Caco-2 (cell line): ENCODE measurements at regions of chr2 and their contacts with region 1.

Region 1: GRCh38 chr2:218395797-218396687 is 3.6 kb upstream of the CTDSP1 start:
- DNase-seq: peak; percentile 97
- H3K4me3 ChIP-seq: peak overlapping the region; percentile 77
- H3K4me3 Mint-ChIP-seq: peak overlapping the region; percentile 98
- H3K27ac Mint-ChIP-seq: peak overlapping the region; percentile 98
- H3K4me1 ChIP-seq: peaks cover 9% of the 10 kb centered on the region
- H3K4me1 Mint-ChIP-seq: peaks cover 22% of the 10 kb centered on the region
- H3K27me3 ChIP-seq: no peaks in the 10 kb centered on the region
- H3K27me3 Mint-ChIP-seq: no peaks in the 10 kb centered on the region
- CTCF ChIP-seq: peak; percentile 86 to 92

Region 2: DNA sequence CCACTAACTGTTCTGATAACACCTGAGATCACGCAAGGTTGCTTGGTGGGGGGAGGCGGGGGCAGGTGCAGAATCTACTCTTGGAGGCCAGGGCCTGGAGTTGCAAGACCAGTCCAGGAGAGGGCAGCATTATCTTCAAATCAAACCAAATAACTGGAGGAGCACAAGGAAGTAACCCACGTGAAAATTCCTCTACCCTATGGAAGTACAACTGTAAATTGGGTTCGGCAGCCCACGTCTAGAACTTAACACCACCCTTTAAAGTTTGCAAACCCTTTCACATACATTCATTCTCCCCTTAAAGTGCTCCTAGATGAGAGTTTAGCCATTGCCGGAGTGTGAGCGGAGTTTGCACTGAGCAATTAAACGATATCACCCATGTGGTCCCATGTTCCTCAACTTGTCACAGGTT is 209.7 kb before region 1 on chr2:
- CTCF ChIA-PET with region 1: no interaction called
- POLR2A ChIA-PET with region 1: no interaction called
- intact Hi-C with region 1: loop called (anchors 2 kb)
- DNase-seq: peak; percentile 78 to 83
- H3K4me3 ChIP-seq: no peak overlapping the region
- H3K4me3 Mint-ChIP-seq: no peak overlapping the region
- H3K27ac Mint-ChIP-seq: no peak overlapping the region
- H3K4me1 ChIP-seq: peaks cover 13% of the 10 kb centered on the region
- H3K4me1 Mint-ChIP-seq: no peaks in the 10 kb centered on the region
- H3K27me3 ChIP-seq: no peaks in the 10 kb centered on the region; the same call in 1 of the 2 replicates
- H3K27me3 Mint-ChIP-seq: no peaks in the 10 kb centered on the region
- CTCF ChIP-seq: peak; percentile 82 to 87

Region 3: DNA sequence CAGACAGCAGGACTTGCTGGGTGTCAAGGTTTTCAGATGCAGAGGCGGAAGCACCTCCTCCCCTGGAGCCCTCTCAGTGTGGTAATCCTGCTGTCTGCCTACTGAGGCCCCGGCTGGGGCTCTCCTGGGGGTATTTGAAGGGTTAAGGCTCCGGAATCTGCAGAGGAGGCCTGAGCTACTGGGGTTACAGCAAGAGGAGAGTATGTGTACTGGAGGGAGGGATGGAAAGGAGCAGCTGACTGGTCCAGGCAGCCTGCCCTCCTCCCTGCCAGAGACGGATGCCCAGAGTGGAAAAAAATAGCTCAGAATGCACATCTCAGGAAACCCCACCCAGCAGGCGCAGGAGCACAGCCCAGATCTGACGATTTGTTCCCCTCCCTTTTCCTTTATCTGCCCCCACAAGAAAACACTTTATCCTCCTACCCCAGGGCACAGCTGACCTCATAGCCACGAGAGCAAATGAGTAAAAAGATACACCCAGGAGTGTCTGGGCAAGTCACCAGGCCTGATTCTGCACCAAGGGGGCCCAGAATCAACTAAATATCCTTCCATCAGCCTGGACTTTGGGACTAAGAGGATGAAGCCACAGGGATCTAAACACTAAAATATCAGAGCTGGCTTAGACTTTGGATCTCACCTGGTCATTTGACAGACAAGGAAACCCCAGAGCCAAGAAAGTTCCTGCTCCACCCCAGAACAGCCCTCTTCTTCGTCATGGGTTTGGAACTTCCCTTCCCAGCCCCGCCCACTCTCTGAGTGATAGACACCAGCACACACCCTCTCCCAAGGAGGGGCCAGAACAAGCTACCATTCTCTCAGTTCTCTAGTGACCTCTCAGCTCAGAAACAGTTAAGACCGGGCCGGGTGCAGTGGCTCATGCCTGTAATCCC is 109.2 kb before region 1 on chr2:
- CTCF ChIA-PET with region 1: interaction called, 13 read pairs
- POLR2A ChIA-PET with region 1: interaction called, 8 read pairs
- intact Hi-C with region 1: no loop called
- DNase-seq: peak; percentile 91 to 95
- H3K4me3 ChIP-seq: no peak overlapping the region
- H3K4me3 Mint-ChIP-seq: peak overlapping the region; percentile 68
- H3K27ac Mint-ChIP-seq: peak overlapping the region; percentile 97
- H3K4me1 ChIP-seq: peaks cover 93% of the 10 kb centered on the region
- H3K4me1 Mint-ChIP-seq: peaks cover 59% of the 10 kb centered on the region
- H3K27me3 ChIP-seq: no peaks in the 10 kb centered on the region
- H3K27me3 Mint-ChIP-seq: no peaks in the 10 kb centered on the region
- CTCF ChIP-seq: no peak

Region 4: DNA sequence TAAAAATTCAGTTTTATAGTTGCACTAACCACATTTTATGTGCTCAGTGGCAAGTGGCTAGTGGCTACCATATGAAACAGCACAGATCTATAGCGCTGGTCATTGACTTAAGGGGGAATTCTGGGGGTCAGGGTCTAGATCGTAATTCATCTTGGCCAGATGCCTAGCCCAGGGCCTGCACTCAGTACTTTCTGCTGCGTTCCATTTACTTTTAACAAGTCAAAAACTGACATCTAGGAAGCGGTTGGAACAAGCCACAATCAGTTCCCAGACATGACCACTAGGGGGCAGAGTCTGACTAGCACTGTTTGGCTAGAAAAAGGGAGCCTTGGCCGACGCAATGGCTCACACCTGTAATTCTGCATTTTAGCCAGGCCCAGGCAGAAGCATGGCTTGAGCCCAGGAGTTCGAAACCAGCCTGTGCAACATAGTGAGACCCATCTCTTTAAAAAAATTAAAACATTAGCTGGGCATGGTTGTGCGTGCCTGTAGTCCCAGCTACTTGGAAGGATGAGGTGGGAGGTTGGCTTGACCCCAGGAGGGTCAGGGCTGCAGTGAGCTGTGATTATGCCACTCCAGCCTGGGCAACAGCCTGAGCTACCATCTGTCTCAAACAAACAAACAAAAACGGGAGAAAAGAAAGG is 94.7 kb before region 1 on chr2:
- CTCF ChIA-PET with region 1: interaction called, 13 read pairs
- POLR2A ChIA-PET with region 1: interaction called, 37 read pairs
- intact Hi-C with region 1: loop called (anchors 1 kb)
- DNase-seq: peak; percentile 91 to 93
- H3K4me3 ChIP-seq: no peak overlapping the region
- H3K4me3 Mint-ChIP-seq: no peak overlapping the region
- H3K27ac Mint-ChIP-seq: no peak overlapping the region
- H3K4me1 ChIP-seq: peaks cover 18% of the 10 kb centered on the region
- H3K4me1 Mint-ChIP-seq: peaks cover 31% of the 10 kb centered on the region
- H3K27me3 ChIP-seq: no peaks in the 10 kb centered on the region
- H3K27me3 Mint-ChIP-seq: no peaks in the 10 kb centered on the region
- CTCF ChIP-seq: peak; percentile 95 to 96

Region 5: DNA sequence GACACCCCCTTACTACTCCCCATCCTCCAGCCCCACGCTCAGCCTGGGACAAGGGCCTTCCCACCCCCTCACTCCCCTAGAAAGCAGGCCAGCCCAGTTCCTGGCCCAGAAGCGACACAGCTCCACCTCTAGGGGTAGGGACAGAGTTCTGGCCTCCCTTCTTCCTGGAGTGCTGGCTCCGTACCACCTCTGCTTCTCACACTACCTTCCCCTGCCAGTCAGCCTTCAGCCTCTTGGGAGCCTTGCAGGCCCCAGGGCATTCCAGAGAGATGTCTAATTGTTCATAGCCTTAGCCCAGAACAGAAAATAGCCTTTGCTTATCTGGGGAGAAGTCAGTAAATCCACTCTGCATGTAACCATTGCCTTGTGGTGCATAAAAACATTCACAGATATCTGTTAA is 52.5 kb before region 1 on chr2:
- CTCF ChIA-PET with region 1: no interaction called
- POLR2A ChIA-PET with region 1: no interaction called
- intact Hi-C with region 1: no loop called
- DNase-seq: no peak
- H3K4me3 ChIP-seq: no peak overlapping the region
- H3K4me3 Mint-ChIP-seq: no peak overlapping the region
- H3K27ac Mint-ChIP-seq: no peak overlapping the region
- H3K4me1 ChIP-seq: no peaks in the 10 kb centered on the region
- H3K4me1 Mint-ChIP-seq: peaks cover 8% of the 10 kb centered on the region
- H3K27me3 ChIP-seq: no peaks in the 10 kb centered on the region
- H3K27me3 Mint-ChIP-seq: no peaks in the 10 kb centered on the region
- CTCF ChIP-seq: no peak

Region 6: DNA sequence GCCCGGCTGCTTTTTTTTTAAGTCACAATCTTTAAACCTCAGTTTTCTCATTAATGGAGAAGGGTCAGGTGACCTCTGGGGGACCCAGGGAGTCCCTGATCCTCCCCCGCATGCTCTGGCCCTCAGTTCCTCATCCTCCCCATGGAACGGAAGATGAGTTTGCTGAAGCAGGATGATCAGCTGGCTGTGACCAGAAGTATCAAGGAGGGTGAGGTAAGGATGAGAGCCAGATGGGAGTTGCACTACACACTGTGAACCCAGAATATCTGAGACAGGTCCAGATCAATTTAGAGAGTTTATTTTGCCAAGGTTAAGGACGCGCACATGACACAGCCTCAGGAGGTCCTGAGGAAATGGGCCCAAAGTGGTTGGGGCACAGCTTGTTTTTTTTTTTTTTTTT is 35.6 kb before region 1 on chr2:
- CTCF ChIA-PET with region 1: interaction called, 7 read pairs
- POLR2A ChIA-PET with region 1: interaction called, 4 read pairs
- intact Hi-C with region 1: loop called (anchors 2 kb)
- DNase-seq: no peak
- H3K4me3 ChIP-seq: no peak overlapping the region
- H3K4me3 Mint-ChIP-seq: no peak overlapping the region
- H3K27ac Mint-ChIP-seq: peak overlapping the region; percentile 48
- H3K4me1 ChIP-seq: peaks cover 50% of the 10 kb centered on the region
- H3K4me1 Mint-ChIP-seq: peaks cover 18% of the 10 kb centered on the region
- H3K27me3 ChIP-seq: no peaks in the 10 kb centered on the region
- H3K27me3 Mint-ChIP-seq: no peaks in the 10 kb centered on the region
- CTCF ChIP-seq: no peak

Region 7: GRCh38 chr2:218418717-218419458 is 22.8 kb after region 1 on chr2 and contains the start of gene VIL1:
- CTCF ChIA-PET with region 1: interaction called, 8 read pairs
- POLR2A ChIA-PET with region 1: interaction called, 10 read pairs
- intact Hi-C with region 1: no loop called
- DNase-seq: peak; percentile 95 to 98
- H3K4me3 ChIP-seq: peak within 1 kb of the TSS; percentile 93
- H3K4me3 Mint-ChIP-seq: peak within 1 kb of the TSS; percentile 90
- H3K27ac Mint-ChIP-seq: peak within 1 kb of the TSS; percentile 88
- H3K4me1 ChIP-seq: peaks cover 42% of the 10 kb centered on the region
- H3K4me1 Mint-ChIP-seq: peaks cover 33% of the 10 kb centered on the region
- H3K27me3 ChIP-seq: no peaks in the 10 kb centered on the region
- H3K27me3 Mint-ChIP-seq: no peaks in the 10 kb centered on the region
- CTCF ChIP-seq: no peak
- total RNA-seq, gene VIL1: 401 and 448 TPM in 2 replicates

Region 8: DNA sequence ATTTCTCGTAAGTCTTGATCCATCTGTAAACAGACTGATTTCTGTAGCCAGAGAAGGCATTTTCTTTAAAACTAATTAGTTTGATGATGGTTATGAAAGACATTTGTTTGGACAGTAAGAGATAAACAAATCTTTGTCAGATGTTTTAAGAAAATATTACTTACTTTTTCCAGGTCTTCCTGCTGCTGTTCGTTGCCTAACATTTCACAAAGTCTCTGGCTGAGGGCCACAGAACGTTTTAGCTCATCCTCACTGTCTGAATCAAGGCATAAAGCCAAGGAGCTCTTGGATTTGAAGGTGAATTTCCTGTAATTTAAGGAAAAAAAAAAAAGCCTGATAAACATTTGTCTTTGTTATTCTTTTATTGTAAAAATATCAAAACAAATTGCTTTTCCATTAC is 80.6 kb after region 1 on chr2:
- CTCF ChIA-PET with region 1: no interaction called
- POLR2A ChIA-PET with region 1: no interaction called
- intact Hi-C with region 1: no loop called
- DNase-seq: no peak
- H3K4me3 ChIP-seq: no peak overlapping the region
- H3K4me3 Mint-ChIP-seq: no peak overlapping the region
- H3K27ac Mint-ChIP-seq: no peak overlapping the region
- H3K4me1 ChIP-seq: no peaks in the 10 kb centered on the region
- H3K4me1 Mint-ChIP-seq: no peaks in the 10 kb centered on the region
- H3K27me3 ChIP-seq: no peaks in the 10 kb centered on the region
- H3K27me3 Mint-ChIP-seq: no peaks in the 10 kb centered on the region
- CTCF ChIP-seq: no peak

Region 9: GRCh38 chr2:218557941-218558340 is 161.9 kb after region 1 on chr2:
- CTCF ChIA-PET with region 1: no interaction called
- POLR2A ChIA-PET with region 1: no interaction called
- intact Hi-C with region 1: no loop called
- DNase-seq: no peak
- H3K4me3 ChIP-seq: no peak overlapping the region
- H3K4me3 Mint-ChIP-seq: no peak overlapping the region
- H3K27ac Mint-ChIP-seq: no peak overlapping the region
- H3K4me1 ChIP-seq: no peaks in the 10 kb centered on the region; the same call in 1 of the 2 replicates
- H3K4me1 Mint-ChIP-seq: no peaks in the 10 kb centered on the region
- H3K27me3 ChIP-seq: no peaks in the 10 kb centered on the region
- H3K27me3 Mint-ChIP-seq: no peaks in the 10 kb centered on the region
- CTCF ChIP-seq: no peak

Region 10: DNA sequence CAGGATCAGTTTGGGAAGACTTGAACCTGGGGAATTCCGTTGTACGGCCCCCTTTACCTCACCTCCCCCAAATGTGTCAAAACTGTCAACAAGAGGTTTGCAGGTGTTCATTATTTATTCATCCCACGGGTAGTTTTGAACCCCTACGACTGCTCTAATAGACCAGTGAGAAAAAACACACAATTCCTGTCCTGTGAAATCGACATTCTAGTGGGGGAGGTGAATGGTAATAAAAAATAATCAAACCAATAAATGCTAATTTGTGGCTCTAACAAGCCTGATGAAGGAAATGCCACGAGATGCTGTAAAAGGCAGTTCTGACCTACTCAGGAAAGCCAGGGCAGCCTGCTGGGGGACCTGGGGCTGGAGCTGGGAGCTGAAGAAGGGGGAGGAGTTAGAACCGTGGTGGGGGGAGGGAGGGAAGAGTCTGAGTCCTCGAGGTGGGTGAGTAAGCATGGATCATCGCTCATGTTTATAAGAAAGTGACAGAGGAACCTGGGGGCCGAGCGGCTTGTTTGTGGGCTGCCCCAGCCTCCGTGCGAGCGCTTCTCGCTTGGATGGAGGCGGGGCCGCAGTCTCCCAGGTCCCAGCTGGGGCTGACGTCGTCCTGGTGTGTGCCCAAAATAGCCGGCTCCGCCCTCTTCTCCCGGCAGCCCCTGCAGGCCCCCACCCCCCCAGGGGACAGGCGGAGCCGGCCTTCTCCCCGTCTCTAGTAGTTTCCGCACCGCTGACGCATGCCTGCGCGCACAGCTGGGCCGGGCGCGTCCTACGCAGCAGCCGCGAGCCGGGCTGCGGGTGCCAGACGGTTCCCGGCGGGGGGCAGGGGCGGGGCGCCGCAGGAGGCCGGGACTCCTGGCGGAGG is 882.8 kb after region 1 on chr2 and contains the start of gene DNAJB2:
- CTCF ChIA-PET with region 1: no interaction called
- POLR2A ChIA-PET with region 1: no interaction called
- intact Hi-C with region 1: no loop called
- DNase-seq: peak; percentile 98
- H3K4me3 ChIP-seq: peak within 1 kb of the TSS; percentile 85
- H3K4me3 Mint-ChIP-seq: peak within 1 kb of the TSS; percentile 98
- H3K27ac Mint-ChIP-seq: peak within 1 kb of the TSS; percentile 98
- H3K4me1 ChIP-seq: peaks cover 36% of the 10 kb centered on the region
- H3K4me1 Mint-ChIP-seq: peaks cover 13% of the 10 kb centered on the region
- H3K27me3 ChIP-seq: no peaks in the 10 kb centered on the region
- H3K27me3 Mint-ChIP-seq: no peaks in the 10 kb centered on the region
- CTCF ChIP-seq: no peak
- total RNA-seq, gene DNAJB2: 60.6 and 61.2 TPM in 2 replicates